CD4-positive, alpha-beta memory T cell (primary cell): ENCODE measurements at regions of chr20 and their contacts with region 1.

Region 1: GRCh38 chr20:23420943-23421931 is at the start of gene NAPB:
- DNase-seq: peak; percentile 90 to 92 (median 91)
- H3K4me3 ChIP-seq: peak within 1 kb of the TSS; percentile 73 to 84
- H3K4me3 Mint-ChIP-seq: peak within 1 kb of the TSS; percentile 83 to 91 (median 87)
- H3K27ac ChIP-seq: peak within 1 kb of the TSS; percentile 72
- H3K27ac Mint-ChIP-seq: peak within 1 kb of the TSS; percentile 84 to 91 (median 89)
- H3K4me1 ChIP-seq: peaks cover 21% of the 10 kb centered on the region
- H3K4me1 Mint-ChIP-seq: peaks cover 16 to 32% (median 26%) of the 10 kb centered on the region in 4 donors
- H3K27me3 ChIP-seq: no peaks in the 10 kb centered on the region
- H3K27me3 Mint-ChIP-seq: peaks cover 5 to 10% of the 10 kb centered on the region in 2 donors
- total RNA-seq, gene NAPB: 13.3 to 14.9 TPM

Region 2: GRCh38 chr20:23350196-23350903 is 70.9 kb before region 1 on chr20 and contains the start of gene NXT1:
- CTCF ChIA-PET with region 1: interaction called, 66 read pairs
- POLR2A ChIA-PET with region 1: interaction called, 86 read pairs
- intact Hi-C with region 1: loop called (anchors 1 kb)
- DNase-seq: peak; percentile 96 to 98 (median 96)
- H3K4me3 ChIP-seq: peak within 1 kb of the TSS; percentile 93 to 97
- H3K4me3 Mint-ChIP-seq: peak within 1 kb of the TSS; percentile 85 to 99 (median 98)
- H3K27ac ChIP-seq: peak within 1 kb of the TSS; percentile 100
- H3K27ac Mint-ChIP-seq: peak within 1 kb of the TSS; percentile 99 to 100 (median 100)
- H3K4me1 ChIP-seq: peaks cover 21% of the 10 kb centered on the region
- H3K4me1 Mint-ChIP-seq: peaks cover 14 to 38% (median 23%) of the 10 kb centered on the region in 4 donors
- H3K27me3 ChIP-seq: no peaks in the 10 kb centered on the region
- H3K27me3 Mint-ChIP-seq: no peaks in the 10 kb centered on the region
- total RNA-seq, gene NXT1: 21.5 to 23.6 TPM

Region 3: DNA sequence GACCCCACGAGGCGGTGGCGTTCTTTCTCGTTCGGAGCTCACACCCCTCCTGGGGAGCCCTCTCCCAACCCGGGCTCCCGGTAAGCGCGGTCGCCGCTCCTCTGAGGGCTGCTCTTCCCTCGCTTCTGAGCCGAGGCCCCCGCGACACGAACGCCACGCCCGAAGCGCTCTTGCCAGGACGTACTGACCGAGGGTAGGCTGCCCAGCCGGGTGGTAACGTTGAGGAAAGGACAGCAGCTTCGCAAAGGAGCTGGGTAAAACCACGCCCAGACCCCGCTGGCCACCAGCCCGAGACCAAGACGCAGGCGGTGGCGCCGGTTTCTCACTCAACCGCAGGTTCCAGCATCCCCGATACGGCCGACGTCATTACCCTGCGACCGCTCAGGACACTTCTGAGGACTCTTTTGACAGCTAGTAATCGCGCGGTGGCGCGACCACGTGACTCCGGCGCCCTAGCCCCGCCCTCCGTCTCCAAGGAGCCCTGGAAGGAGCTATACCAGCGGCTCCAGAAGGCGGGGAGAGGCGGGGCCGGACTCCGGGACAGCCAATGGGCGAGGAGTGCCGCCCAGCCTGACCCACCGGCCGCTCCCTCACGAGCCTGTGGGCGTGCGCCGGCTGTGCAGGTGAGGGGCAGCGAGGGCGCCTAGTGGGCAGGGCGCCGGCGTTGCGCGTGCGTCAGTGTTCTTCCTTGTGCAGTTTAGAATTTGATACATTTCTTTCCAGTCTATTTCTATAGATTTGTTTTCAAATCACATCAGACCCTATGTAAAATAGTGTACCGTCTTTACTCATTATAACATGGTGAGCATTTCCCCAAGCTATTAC is 63.3 kb before region 1 on chr20:
- CTCF ChIA-PET with region 1: interaction called, 19 read pairs
- POLR2A ChIA-PET with region 1: interaction called, 48 read pairs
- intact Hi-C with region 1: loop called (anchors 1 kb)
- DNase-seq: peak; percentile 99 to 100 (median 99)
- H3K4me3 ChIP-seq: peak overlapping the region; percentile 80 to 97
- H3K4me3 Mint-ChIP-seq: peak overlapping the region; percentile 92 to 97 (median 96)
- H3K27ac ChIP-seq: peak overlapping the region; percentile 95
- H3K27ac Mint-ChIP-seq: peak overlapping the region; percentile 97 to 100 (median 99)
- H3K4me1 ChIP-seq: peaks cover 28% of the 10 kb centered on the region
- H3K4me1 Mint-ChIP-seq: peaks cover 8 to 48% (median 19%) of the 10 kb centered on the region in 4 donors
- H3K27me3 ChIP-seq: no peaks in the 10 kb centered on the region
- H3K27me3 Mint-ChIP-seq: no peaks in the 10 kb centered on the region

Region 4: GRCh38 chr20:23404196-23404595 is 17.0 kb before region 1 on chr20:
- CTCF ChIA-PET with region 1: interaction called, 10 read pairs
- POLR2A ChIA-PET with region 1: no interaction called
- intact Hi-C with region 1: no loop called
- DNase-seq: no peak
- H3K4me3 ChIP-seq: no peak overlapping the region
- H3K4me3 Mint-ChIP-seq: no peak overlapping the region
- H3K27ac ChIP-seq: no peak overlapping the region
- H3K27ac Mint-ChIP-seq: no peak overlapping the region
- H3K4me1 ChIP-seq: peaks cover 23% of the 10 kb centered on the region
- H3K4me1 Mint-ChIP-seq: peaks cover 16 to 33% (median 25%) of the 10 kb centered on the region in 4 donors
- H3K27me3 ChIP-seq: no peaks in the 10 kb centered on the region
- H3K27me3 Mint-ChIP-seq: no peaks in the 10 kb centered on the region